ENCODE measurements at regions of chr11 and their contacts with region 1.

Region 1: DNA sequence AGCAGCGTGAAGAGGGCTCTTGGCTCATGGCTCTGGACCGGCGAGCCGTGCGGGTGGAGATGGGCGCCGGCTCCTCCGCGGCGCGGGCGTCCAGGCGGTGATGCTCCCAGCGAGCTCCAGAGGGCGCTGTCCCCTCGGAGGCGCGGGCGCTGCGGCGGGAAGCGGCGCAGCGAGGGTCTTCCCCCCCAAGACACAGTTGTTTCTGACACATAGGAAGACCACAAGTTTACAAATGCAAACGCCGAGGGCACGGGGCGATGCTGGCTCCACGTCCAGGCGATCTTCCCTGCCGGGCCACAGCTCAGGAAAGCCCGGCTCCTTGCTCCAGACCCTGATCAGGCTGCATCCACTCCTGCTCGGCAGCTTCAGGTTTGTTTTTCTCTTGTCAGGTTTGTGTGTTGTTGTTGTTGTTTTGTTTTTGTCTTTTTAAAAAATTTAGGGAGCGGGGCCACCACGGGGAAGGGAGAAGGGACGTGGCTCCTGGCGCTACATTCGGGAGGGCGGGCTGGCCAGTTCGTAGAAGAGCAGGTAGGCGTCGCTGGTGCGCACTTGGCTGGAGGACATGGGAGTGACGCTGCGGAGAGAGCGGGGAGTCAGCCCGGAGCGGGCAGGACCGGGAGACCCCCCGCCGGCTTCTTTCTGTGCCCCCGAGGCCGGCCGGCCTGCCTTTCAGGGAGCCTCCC is 10.0 kb upstream of the MFRP start:
- DNase-seq: peak; percentile 75 to 86
- H3K4me3 ChIP-seq: peak overlapping the region; percentile 45 to 77 (median 52)
- H3K27ac ChIP-seq: peak overlapping the region; percentile 73 to 82
- H3K4me1 ChIP-seq: peaks cover 4 to 5% of the 10 kb centered on the region in 2 donors
- H3K27me3 ChIP-seq: no peaks in the 10 kb centered on the region
- CTCF ChIP-seq: peak; percentile 43 to 96 (median 95)
- POLR2A ChIP-seq: no peak

Region 2: DNA sequence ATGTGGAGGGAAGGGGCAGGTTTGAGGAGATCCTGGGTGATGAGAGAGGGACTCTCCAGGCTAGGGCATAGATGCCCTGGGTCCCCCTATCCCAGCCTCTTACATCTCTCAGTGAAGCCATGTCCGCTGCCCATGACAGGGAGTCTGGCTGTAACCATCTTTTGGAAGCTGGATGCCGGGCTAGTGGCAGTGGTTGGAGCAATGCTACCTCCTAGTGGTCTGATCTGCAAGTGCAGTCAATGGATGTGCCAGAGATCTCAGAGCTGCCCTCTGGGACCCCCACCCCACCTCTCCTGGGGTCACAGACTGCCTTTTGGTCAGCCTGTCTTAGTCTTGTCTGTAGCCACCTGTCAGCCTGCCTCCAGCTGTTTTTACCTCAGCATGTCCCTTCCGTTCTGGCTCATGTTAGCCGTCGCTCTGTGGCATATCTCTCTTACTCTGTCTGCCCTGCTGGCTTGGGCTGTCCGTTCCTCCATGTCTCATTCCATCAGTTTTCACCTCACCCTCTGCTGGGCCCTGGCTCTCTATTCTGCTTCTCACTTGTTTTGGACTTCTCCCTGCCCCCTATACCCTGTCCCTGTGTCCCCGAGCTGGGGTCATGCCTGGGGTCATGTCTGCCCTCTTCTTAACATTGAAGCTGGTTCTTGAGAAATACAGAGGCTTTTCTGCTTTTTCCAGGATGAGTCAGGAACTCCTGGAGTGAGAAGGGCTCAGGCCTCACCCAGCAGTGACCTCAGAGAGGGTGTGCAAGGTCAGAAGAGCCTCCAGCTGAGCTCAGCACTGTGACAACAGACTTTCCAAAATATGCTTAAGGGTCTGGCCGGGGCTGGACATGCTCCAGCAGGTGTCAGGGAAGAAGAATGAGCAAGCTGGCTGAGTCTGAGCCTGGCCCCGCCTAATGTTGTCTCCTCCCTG is 118.4 kb after region 1 on chr11:
- intact Hi-C with region 1: loop called (anchors 5 kb)
- DNase-seq: peak in 1 of 2 donors; percentile 66
- H3K4me3 ChIP-seq: no peak overlapping the region
- H3K27ac ChIP-seq: no peak overlapping the region
- H3K4me1 ChIP-seq: no peaks in the 10 kb centered on the region
- H3K27me3 ChIP-seq: no peaks in the 10 kb centered on the region
- CTCF ChIP-seq: peak; percentile 84 to 89 (median 88)
- POLR2A ChIP-seq: no peak

Measured in breast epithelium (tissue), 4 donors.